Activated CD8-positive, alpha-beta memory T cell treated with anti-CD3 and anti-CD28 coated beads, Interleukin-2, amount 10 ng/mL, durations not matched to agents 7 days and 5 days (primary cell): ENCODE measurements at regions of chr1 and their contacts with region 1.

Region 1: DNA sequence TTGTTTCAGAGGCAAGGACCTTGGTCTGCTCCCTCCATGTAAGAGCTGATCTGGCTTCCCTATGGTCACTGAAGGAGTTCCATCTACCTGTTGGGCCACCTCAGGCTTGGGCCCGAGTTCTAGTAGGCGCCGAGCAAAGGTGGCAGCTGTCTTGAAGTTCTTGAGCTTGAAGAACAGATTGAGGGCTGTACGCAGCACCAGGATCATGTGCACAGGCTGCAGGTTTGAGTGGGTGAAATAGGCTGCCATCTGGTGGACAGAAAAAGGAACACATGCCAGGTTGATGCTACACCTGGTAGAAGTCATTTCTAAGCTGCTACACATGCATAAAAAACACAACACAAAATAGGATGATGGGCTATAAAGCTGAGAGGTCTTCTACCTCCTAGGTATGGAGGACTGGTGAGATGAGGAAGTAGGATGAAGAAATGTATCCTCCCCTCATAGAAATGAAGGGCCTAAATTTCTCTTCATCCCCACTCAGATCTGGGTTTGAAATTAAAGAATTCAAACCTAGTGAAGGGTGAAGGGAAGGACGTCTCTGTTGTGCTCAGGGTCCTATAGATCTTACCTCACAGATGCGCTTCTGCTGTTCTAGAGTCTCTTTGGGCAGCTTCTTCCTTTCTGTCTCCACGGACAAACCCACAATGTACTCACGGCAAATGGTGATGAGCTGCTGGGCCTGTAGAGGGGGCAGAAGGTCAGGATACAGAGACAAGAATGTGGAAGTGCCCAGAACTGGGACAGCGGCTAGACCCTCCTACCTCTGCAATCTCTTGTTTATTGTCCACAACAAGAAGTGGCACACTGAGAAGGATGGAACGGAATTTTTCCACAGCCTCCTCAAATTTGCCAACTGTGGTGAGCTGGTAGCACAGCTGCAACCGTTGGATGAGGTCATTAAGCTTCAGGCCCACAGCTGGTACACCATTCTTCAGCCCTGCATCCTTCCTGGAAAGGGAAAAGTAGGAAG is 6.6 kb upstream of the PEX19 start:
- DNase-seq: peak; percentile 78
- ATAC-seq: peak; percentile 93
- H3K4me3 Mint-ChIP-seq: no peak overlapping the region
- H3K27ac Mint-ChIP-seq: peak overlapping the region; percentile 10
- H3K4me1 Mint-ChIP-seq: no peaks in the 10 kb centered on the region
- H3K27me3 Mint-ChIP-seq: no peaks in the 10 kb centered on the region

Region 2: DNA sequence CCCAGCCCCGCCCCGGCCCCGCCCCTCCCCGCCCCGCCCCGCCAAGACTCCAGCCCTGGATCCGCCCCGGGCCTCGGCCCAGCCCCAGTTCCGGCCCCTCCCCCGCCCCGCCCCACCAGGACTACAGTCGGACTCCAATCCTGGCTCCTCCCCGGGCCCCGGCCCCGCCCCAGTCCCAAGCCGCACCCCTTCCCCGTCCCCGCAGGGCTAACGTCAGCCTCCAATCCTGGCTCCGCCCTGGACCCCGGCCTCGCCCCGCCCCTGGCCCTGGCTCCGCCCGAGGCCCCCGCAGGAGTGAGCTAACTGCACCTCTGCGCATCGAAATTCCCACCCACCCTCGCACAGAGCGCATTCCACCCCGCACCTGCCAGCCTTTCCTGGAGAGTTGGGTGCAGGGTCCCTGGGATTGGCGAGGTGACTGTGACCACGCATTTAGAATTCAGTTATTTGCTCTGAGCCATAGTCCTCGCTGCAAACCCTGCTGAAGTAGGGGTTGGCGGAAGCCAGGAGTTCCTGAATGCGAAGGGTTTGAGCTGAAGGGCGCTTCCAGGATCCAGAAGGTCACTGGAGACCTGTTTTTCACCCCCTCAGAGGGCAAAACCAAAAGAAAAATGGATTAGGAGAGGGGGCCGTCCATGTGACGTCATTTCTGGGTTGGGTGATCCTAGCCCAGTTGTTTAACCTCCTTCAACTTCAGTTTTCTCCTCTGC is 192.5 kb before region 1 on chr1:
- CTCF ChIA-PET with region 1: interaction called, 66 read pairs
- DNase-seq: peak; percentile 99
- ATAC-seq: peak; percentile 89
- H3K4me3 Mint-ChIP-seq: peak overlapping the region; percentile 70
- H3K27ac Mint-ChIP-seq: peak overlapping the region; percentile 84
- H3K4me1 Mint-ChIP-seq: peaks cover 38% of the 10 kb centered on the region
- H3K27me3 Mint-ChIP-seq: no peaks in the 10 kb centered on the region

Region 3: DNA sequence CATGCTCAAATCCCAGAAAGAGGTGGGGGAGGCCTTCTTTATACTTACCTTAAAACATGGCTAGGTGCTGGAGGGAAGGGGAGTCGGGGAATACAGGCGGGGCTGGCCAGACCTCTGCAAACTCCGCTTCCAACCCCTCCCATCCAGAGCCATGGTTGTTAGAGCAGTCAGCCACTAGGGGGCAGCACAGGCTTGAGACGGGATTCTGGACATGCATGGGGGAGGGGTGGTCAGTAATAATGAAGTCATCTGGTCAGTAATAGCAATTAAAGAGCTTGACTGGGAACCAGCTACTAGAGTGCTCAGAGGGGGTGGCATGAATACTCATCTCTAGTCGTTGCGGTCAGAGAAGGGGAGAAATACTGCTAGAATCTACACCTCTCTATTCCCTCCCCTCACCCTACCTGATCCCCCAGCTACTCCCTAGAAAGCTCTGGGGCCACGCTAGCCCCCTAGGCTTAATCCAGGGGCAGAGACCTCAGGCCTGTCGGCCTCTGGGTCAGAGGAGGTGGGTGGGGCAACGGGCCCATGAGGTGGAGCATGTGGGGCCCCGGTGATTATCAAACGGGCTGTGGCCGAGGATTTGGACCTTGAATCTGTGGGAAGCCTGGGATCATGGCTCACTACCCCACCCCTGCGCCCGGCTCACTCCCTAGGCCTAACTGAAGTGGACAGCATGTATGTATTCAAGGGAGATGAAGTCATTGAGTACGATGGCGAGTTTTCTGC is 98.3 kb before region 1 on chr1:
- CTCF ChIA-PET with region 1: interaction called, 64 read pairs
- DNase-seq: peak; percentile 84
- ATAC-seq: peak; percentile 73
- H3K4me3 Mint-ChIP-seq: no peak overlapping the region
- H3K27ac Mint-ChIP-seq: no peak overlapping the region
- H3K4me1 Mint-ChIP-seq: no peaks in the 10 kb centered on the region
- H3K27me3 Mint-ChIP-seq: no peaks in the 10 kb centered on the region

Region 4: DNA sequence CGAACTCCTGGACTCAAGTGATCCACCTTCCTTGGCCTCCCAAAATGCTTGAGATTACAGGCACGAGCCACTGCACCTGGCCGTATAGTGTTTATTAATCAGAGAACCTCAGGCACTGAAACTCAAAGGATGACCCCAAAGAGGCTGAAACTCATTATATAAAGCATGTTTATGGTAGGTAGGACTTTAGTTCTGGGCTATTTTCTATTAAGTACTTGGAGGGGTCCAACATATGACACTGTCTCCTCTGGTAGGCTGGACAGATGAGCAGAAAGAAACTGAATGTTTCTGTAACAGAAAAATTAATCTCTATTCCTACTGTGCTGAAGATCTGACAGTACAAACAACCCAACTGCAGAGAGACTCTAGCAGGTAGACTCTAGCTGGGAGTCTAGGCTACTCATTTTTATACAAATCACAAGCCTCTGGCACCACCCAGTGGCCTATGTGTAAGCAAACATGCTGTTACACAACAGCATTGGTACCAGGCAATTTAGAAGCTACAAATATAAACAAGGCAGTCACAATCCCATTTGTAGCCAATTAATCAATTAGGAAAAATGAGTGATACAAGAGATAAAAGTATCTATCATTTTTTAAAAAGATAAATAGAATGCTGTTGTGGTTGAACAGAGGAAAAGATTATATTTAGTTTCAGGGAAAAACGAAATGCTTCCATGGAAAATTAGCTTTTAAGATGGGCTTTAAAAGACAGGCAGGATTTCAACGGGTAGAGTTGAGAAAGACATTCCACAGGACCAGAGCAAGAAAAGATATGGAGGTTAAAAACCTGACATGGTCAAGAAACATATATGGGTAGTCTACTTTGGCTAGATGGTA is 39.6 kb before region 1 on chr1:
- CTCF ChIA-PET with region 1: interaction called, 17 read pairs
- DNase-seq: peak; percentile 74
- ATAC-seq: peak; percentile 92
- H3K4me3 Mint-ChIP-seq: no peak overlapping the region
- H3K27ac Mint-ChIP-seq: no peak overlapping the region
- H3K4me1 Mint-ChIP-seq: peaks cover 11% of the 10 kb centered on the region
- H3K27me3 Mint-ChIP-seq: no peaks in the 10 kb centered on the region

Region 5: DNA sequence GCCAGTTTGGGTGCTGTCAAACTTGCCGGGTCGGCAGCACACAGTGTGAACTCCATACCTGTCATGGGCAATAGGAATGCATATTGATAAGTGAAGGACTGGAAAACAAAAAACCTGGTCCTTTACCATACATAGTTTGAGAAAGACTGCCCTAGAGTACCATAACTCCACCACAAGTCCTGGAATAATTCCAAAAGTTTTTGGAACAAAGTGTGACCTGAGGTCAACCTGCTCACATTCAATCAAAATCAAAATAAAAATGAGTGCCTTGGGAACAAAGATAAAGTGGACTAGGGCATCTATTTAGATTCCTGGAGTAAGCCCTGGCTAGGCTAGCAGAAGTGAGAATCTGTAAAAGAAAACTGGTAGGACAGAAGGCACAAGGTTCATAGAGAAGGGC is 14.2 kb before region 1 on chr1:
- CTCF ChIA-PET with region 1: interaction called, 27 read pairs
- DNase-seq: no peak
- ATAC-seq: no peak
- H3K4me3 Mint-ChIP-seq: no peak overlapping the region
- H3K27ac Mint-ChIP-seq: no peak overlapping the region
- H3K4me1 Mint-ChIP-seq: no peaks in the 10 kb centered on the region
- H3K27me3 Mint-ChIP-seq: no peaks in the 10 kb centered on the region

Region 6: DNA sequence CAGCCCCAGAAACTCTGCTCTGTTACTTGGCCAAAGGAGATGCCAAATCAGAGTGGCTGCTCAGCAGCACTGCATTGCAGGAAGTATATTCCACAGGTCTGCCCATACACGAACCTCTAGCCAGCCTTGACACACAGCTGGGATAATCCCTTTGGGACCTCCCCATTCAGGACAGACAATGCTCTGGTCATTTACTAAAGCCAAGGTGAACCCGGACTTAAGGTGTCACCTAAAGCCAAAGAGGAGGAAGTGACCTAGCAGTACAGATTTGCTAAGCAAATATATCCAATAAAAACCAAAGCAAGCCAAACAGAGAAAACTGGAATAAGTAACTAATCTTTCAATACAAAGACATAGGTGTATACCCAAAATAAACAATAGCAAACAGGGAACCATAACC is 23.8 kb after region 1 on chr1:
- CTCF ChIA-PET with region 1: interaction called, 15 read pairs
- DNase-seq: no peak
- ATAC-seq: no peak
- H3K4me3 Mint-ChIP-seq: no peak overlapping the region
- H3K27ac Mint-ChIP-seq: no peak overlapping the region
- H3K4me1 Mint-ChIP-seq: peaks cover 6% of the 10 kb centered on the region
- H3K27me3 Mint-ChIP-seq: no peaks in the 10 kb centered on the region